ENCODE measurements at regions of chr11 and their contacts with region 1.

Region 1: DNA sequence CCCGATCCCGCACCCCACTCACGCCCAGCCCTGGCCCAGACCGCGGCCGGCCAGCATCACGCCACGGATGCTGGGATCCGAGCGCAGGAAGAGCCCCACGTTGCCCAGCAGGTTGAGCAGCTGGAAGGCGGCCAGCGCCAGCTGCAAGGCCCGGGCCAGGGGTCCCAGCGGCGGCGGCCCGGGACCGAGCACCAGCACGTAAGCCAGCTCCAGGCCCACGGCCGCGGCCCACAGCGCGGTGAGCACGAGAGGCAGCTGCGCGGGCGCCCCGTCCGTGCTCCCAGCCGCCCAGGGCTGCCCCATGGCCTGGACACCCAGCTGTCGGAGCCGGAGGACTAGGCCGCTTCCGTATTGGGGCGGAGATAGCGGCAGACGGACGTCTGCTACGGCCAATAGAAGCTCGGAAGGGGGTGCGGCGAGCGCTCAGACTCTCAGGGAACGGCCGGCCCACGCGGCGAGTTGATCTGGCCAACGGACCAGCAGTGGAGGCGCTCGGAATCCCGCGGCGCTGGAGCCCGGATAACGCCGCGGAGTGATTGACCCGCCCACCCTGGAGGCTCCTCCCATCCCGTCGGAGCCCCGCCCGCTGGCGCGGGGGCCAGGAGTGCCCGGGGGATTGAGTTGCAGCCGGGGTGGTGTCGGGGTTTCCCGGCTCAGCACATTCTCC is at the start of gene ZDHHC24:
- DNase-seq: peak; percentile 64 to 84 (median 77)
- ATAC-seq: peak; percentile 77 to 78
- H3K4me3 Mint-ChIP-seq: peak within 1 kb of the TSS; percentile 85 to 95 (median 88)
- H3K27ac Mint-ChIP-seq: peak within 1 kb of the TSS; percentile 71 to 96 (median 92)
- H3K4me1 Mint-ChIP-seq: peaks cover 36 to 47% (median 41%) of the 10 kb centered on the region in 4 donors
- H3K27me3 Mint-ChIP-seq: no peaks in the 10 kb centered on the region
- polyA plus RNA-seq, gene ZDHHC24: 9.6 to 14.1 (median 10.5) TPM

Region 2: DNA sequence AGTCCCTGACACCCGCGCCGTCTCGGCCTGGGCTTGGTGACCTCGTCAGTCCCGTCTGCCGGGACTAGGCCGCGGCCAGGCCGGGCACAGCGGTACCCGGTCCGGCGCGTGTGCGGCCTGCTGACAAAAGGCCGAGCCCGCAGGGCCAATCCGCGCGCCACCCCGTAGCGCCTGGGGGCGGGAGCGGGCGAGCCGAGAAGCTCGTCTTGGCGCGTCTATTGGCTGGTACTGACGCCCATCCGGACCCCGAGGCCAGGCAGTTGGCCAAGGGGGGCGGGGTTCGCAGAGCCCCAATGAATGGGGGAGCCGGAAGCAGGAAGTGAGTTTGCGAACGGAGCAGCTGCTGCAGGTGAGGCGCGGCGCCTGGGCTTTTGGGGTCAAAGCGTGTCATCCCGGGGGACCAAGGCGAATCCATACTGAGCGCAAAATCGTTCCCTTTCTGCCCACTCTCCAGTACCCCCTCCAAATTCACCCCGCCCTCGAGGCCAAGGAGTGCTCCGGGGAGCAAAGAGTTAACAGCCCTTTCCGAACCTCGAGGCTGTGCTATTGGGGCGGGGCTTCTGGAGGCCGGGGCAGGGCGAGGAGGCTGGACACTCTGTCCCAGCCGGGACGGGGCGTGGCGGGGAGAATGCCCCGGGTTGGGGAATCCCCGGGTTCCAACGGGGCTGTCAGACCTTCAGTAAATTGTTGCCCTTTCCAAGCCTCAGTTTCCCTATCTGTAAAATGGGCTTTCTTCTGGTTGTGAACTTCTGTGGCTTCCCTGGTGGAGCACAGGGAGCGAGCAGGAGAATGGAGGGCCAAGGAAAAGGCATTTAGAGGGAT is 65.5 kb before region 1 on chr11 and contains the start of gene DPP3:
- POLR2A ChIA-PET with region 1: interaction called, 10 read pairs
- DNase-seq: peak; percentile 92 to 97 (median 95)
- ATAC-seq: peak; percentile 98 to 99
- H3K4me3 Mint-ChIP-seq: peak within 1 kb of the TSS; percentile 86 to 94 (median 92)
- H3K27ac Mint-ChIP-seq: peak within 1 kb of the TSS; percentile 80 to 96 (median 92)
- H3K4me1 Mint-ChIP-seq: peaks cover 17 to 34% (median 30%) of the 10 kb centered on the region in 4 donors
- H3K27me3 Mint-ChIP-seq: no peaks in the 10 kb centered on the region
- polyA plus RNA-seq, gene DPP3: 20.0 to 25.4 (median 20.5) TPM

Region 3: GRCh38 chr11:66562907-66563583 is 17.2 kb after region 1 on chr11:
- POLR2A ChIA-PET with region 1: interaction called, 18 read pairs
- DNase-seq: no peak
- ATAC-seq: no peak
- H3K4me3 Mint-ChIP-seq: no peak overlapping the region
- H3K27ac Mint-ChIP-seq: no peak overlapping the region
- H3K4me1 Mint-ChIP-seq: peaks cover 0 to 19% (median 7%) of the 10 kb centered on the region in 4 donors
- H3K27me3 Mint-ChIP-seq: peaks cover 0 to 9% (median 1%) of the 10 kb centered on the region in 5 donors

Region 4: GRCh38 chr11:66568124-66568916 is 22.5 kb after region 1 on chr11 and contains the start of gene CTSF:
- POLR2A ChIA-PET with region 1: interaction called, 18 read pairs
- DNase-seq: peak; percentile 50 to 89 (median 68)
- ATAC-seq: peak; percentile 94 to 99
- H3K4me3 Mint-ChIP-seq: peak within 1 kb of the TSS; percentile 75 to 89 (median 86)
- H3K27ac Mint-ChIP-seq: peak within 1 kb of the TSS in 9 of 10 donors; percentile 66 to 95 (median 87)
- H3K4me1 Mint-ChIP-seq: peaks cover 0 to 18% (median 10%) of the 10 kb centered on the region in 4 donors
- H3K27me3 Mint-ChIP-seq: peaks cover 0 to 2% (median 0%) of the 10 kb centered on the region in 5 donors
- polyA plus RNA-seq, gene CTSF: 25.1 to 40.9 (median 25.4) TPM

Region 5: GRCh38 chr11:66638177-66639065 is 92.6 kb after region 1 on chr11 and contains the start of gene RBM4:
- POLR2A ChIA-PET with region 1: interaction called, 35 read pairs
- DNase-seq: peak; percentile 84 to 99 (median 98)
- ATAC-seq: peak; percentile 84 to 90
- H3K4me3 Mint-ChIP-seq: peak within 1 kb of the TSS; percentile 89 to 99 (median 95)
- H3K27ac Mint-ChIP-seq: peak within 1 kb of the TSS; percentile 89 to 99 (median 97)
- H3K4me1 Mint-ChIP-seq: peaks cover 36 to 73% (median 69%) of the 10 kb centered on the region in 4 donors
- H3K27me3 Mint-ChIP-seq: no peaks in the 10 kb centered on the region
- polyA plus RNA-seq, gene RBM4: 250 to 283 (median 262) TPM

Measured in naive thymus-derived CD8-positive, alpha-beta T cell (primary cell).